Transverse colon (tissue), 4 donors: ENCODE measurements at regions of chr2 and their contacts with region 1.

Region 1: DNA sequence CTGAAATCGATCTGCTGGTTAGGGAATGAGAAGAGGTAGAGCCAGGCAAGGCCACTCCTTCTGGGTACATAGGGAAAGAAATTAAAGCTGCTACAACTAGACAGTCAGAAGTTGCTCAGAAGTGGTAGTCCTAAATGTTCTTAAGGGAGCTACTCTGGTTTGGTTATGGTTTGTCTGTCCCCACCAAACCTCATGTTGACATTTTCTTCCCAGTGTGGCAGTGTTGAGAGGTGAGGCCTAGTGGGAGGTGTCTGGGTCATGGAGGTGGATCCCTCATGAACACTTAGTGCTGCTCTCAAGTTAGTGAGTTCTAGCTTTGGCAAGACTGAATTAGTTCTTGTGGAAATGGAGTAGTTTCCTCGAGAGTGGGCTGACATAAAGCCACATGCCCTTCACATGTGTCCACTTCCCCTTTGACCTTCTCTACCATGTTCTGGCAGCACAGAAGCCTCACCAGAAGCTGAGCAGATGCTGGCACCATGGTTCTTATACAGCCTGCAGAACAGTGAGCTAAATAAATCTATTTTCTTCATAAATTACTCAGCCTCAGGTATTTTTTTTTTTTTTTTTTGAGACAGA is 14.7 kb downstream of the RNF103 start:
- DNase-seq: no peak
- H3K4me3 ChIP-seq: no peak overlapping the region
- H3K27ac ChIP-seq: no peak overlapping the region
- H3K4me1 ChIP-seq: no peaks in the 10 kb centered on the region
- H3K27me3 ChIP-seq: no peaks in the 10 kb centered on the region
- CTCF ChIP-seq: no peak
- EP300 ChIP-seq: no peak
- POLR2A ChIP-seq: no peak

Region 2: GRCh38 chr2:86570059-86570458 is 38.9 kb before region 1 on chr2:
- in situ Hi-C with region 1: no loop called
- intact Hi-C with region 1: loop called (anchors 1 kb)
- DNase-seq: no peak
- H3K4me3 ChIP-seq: no peak overlapping the region
- H3K27ac ChIP-seq: no peak overlapping the region
- H3K4me1 ChIP-seq: no peaks in the 10 kb centered on the region
- H3K27me3 ChIP-seq: no peaks in the 10 kb centered on the region
- CTCF ChIP-seq: no peak
- EP300 ChIP-seq: no peak
- POLR2A ChIP-seq: no peak